CD8-positive, alpha-beta T cell (primary cell): ENCODE measurements at regions of chr10 and their contacts with region 1.

Region 1: GRCh38 chr10:112314822-112315474 is 31.7 kb downstream of the TECTB start:
- DNase-seq: peak; percentile 43 to 80 (median 76)
- ATAC-seq: peak; percentile 61
- H3K4me3 ChIP-seq: no peak overlapping the region
- H3K4me3 Mint-ChIP-seq: no peak overlapping the region
- H3K27ac ChIP-seq: no peak overlapping the region
- H3K27ac Mint-ChIP-seq: no peak overlapping the region
- H3K4me1 ChIP-seq: no peaks in the 10 kb centered on the region
- H3K4me1 Mint-ChIP-seq: no peaks in the 10 kb centered on the region
- H3K27me3 ChIP-seq: no peaks in the 10 kb centered on the region
- H3K27me3 Mint-ChIP-seq: peaks cover 30% of the 10 kb centered on the region
- CTCF ChIP-seq: peak; percentile 86

Region 2: DNA sequence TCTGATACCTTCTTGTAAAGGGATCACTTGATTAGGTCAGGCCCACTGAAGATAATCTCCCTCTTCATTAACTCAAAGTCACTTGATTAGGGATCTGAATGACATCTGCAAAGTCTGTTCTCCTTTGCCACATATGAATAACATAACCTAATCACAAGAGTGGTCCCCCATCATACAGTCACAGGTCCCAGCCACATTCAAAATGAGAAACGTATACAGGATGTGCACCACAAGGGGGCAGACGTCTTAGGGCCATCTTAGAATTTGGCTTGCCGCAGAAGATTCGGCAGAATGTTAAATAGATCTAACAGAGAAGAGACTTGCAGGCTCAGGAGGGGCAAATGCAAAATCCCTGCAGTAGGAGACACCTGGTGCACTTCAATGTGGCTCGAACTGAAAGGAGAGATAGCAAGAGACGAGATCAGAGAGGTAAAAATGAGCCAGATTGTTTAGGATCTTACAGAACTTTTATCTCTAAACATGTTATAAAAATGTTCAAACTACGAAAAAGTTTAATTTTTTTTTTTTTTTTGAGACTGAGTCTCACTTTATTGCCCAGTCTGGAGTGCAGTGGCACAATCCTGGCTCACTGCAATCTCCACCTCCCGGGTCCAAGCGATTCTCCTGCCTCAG is 1757.9 kb before region 1 on chr10:
- CTCF ChIA-PET with region 1: interaction called, 3 read pairs
- POLR2A ChIA-PET with region 1: no interaction called
- intact Hi-C with region 1: loop called in 1 of 2 experiments (anchors 2 kb)
- DNase-seq: peak; percentile 37 to 85 (median 71)
- ATAC-seq: peak; percentile 99
- H3K4me3 ChIP-seq: no peak overlapping the region
- H3K4me3 Mint-ChIP-seq: no peak overlapping the region
- H3K27ac ChIP-seq: no peak overlapping the region
- H3K27ac Mint-ChIP-seq: no peak overlapping the region
- H3K4me1 ChIP-seq: no peaks in the 10 kb centered on the region
- H3K4me1 Mint-ChIP-seq: peaks cover 3% of the 10 kb centered on the region
- H3K27me3 ChIP-seq: no peaks in the 10 kb centered on the region
- H3K27me3 Mint-ChIP-seq: peaks cover 6% of the 10 kb centered on the region
- CTCF ChIP-seq: peak; percentile 82

Region 3: GRCh38 chr10:112115799-112116385 is 199.1 kb before region 1 on chr10:
- CTCF ChIA-PET with region 1: no interaction called
- POLR2A ChIA-PET with region 1: no interaction called
- intact Hi-C with region 1: loop called in 1 of 2 experiments (anchors 5 kb)
- DNase-seq: peak in 6 of 9 experiments; percentile 7 to 49 (median 34)
- ATAC-seq: no peak
- H3K4me3 ChIP-seq: no peak overlapping the region
- H3K4me3 Mint-ChIP-seq: no peak overlapping the region
- H3K27ac ChIP-seq: no peak overlapping the region
- H3K27ac Mint-ChIP-seq: no peak overlapping the region
- H3K4me1 ChIP-seq: no peaks in the 10 kb centered on the region
- H3K4me1 Mint-ChIP-seq: no peaks in the 10 kb centered on the region
- H3K27me3 ChIP-seq: no peaks in the 10 kb centered on the region
- H3K27me3 Mint-ChIP-seq: no peaks in the 10 kb centered on the region
- CTCF ChIP-seq: peak; percentile 58

Region 4: GRCh38 chr10:112294169-112294568 is 20.8 kb before region 1 on chr10:
- CTCF ChIA-PET with region 1: interaction called, 10 read pairs
- POLR2A ChIA-PET with region 1: no interaction called
- intact Hi-C with region 1: no loop called
- DNase-seq: no peak
- ATAC-seq: no peak
- H3K4me3 ChIP-seq: no peak overlapping the region
- H3K4me3 Mint-ChIP-seq: no peak overlapping the region
- H3K27ac ChIP-seq: no peak overlapping the region
- H3K27ac Mint-ChIP-seq: no peak overlapping the region
- H3K4me1 ChIP-seq: no peaks in the 10 kb centered on the region
- H3K4me1 Mint-ChIP-seq: no peaks in the 10 kb centered on the region
- H3K27me3 ChIP-seq: peaks cover 0 to 4% of the 10 kb centered on the region in 2 experiments
- H3K27me3 Mint-ChIP-seq: peaks cover 8% of the 10 kb centered on the region
- CTCF ChIP-seq: no peak

Region 5: GRCh38 chr10:112327678-112328077 is 12.7 kb after region 1 on chr10:
- CTCF ChIA-PET with region 1: interaction called, 22 read pairs
- POLR2A ChIA-PET with region 1: no interaction called
- intact Hi-C with region 1: no loop called
- DNase-seq: no peak
- ATAC-seq: no peak
- H3K4me3 ChIP-seq: no peak overlapping the region
- H3K4me3 Mint-ChIP-seq: no peak overlapping the region
- H3K27ac ChIP-seq: no peak overlapping the region
- H3K27ac Mint-ChIP-seq: no peak overlapping the region
- H3K4me1 ChIP-seq: no peaks in the 10 kb centered on the region
- H3K4me1 Mint-ChIP-seq: no peaks in the 10 kb centered on the region
- H3K27me3 ChIP-seq: no peaks in the 10 kb centered on the region
- H3K27me3 Mint-ChIP-seq: peaks cover 8% of the 10 kb centered on the region
- CTCF ChIP-seq: no peak

Region 6: DNA sequence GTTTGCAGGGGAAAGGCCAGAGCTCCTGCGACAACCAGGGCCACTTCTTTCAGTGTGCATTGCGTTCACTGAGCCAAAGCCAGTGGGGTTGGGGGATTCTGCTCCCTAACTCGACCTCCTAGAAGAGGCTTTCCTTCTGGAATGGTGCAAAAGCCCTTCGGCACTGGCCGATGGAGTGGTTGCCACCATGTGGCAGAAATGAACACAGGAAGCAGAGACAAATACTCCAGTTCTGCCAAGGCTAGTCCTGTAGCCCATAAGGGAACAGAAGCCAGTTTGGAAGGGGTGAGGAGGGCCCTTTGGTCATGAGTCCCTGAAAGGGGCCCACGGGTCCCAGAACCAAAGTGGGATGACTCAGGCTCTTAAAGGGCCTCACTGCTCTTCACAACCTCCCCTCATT is 29.3 kb after region 1 on chr10:
- CTCF ChIA-PET with region 1: no interaction called
- POLR2A ChIA-PET with region 1: no interaction called
- intact Hi-C with region 1: no loop called
- DNase-seq: no peak
- ATAC-seq: no peak
- H3K4me3 ChIP-seq: no peak overlapping the region
- H3K4me3 Mint-ChIP-seq: no peak overlapping the region
- H3K27ac ChIP-seq: no peak overlapping the region
- H3K27ac Mint-ChIP-seq: no peak overlapping the region
- H3K4me1 ChIP-seq: no peaks in the 10 kb centered on the region
- H3K4me1 Mint-ChIP-seq: no peaks in the 10 kb centered on the region
- H3K27me3 ChIP-seq: no peaks in the 10 kb centered on the region
- H3K27me3 Mint-ChIP-seq: no peaks in the 10 kb centered on the region
- CTCF ChIP-seq: no peak

Region 7: GRCh38 chr10:112434988-112435619 is 120.2 kb after region 1 on chr10:
- CTCF ChIA-PET with region 1: interaction called, 6 read pairs
- POLR2A ChIA-PET with region 1: no interaction called
- intact Hi-C with region 1: loop called (anchors 2 to 10 kb)
- DNase-seq: peak in 2 of 9 experiments; percentile 43 to 56
- ATAC-seq: peak; percentile 36
- H3K4me3 ChIP-seq: no peak overlapping the region
- H3K4me3 Mint-ChIP-seq: no peak overlapping the region
- H3K27ac ChIP-seq: no peak overlapping the region
- H3K27ac Mint-ChIP-seq: no peak overlapping the region
- H3K4me1 ChIP-seq: no peaks in the 10 kb centered on the region
- H3K4me1 Mint-ChIP-seq: no peaks in the 10 kb centered on the region
- H3K27me3 ChIP-seq: no peaks in the 10 kb centered on the region
- H3K27me3 Mint-ChIP-seq: no peaks in the 10 kb centered on the region
- CTCF ChIP-seq: peak; percentile 63

Region 8: DNA sequence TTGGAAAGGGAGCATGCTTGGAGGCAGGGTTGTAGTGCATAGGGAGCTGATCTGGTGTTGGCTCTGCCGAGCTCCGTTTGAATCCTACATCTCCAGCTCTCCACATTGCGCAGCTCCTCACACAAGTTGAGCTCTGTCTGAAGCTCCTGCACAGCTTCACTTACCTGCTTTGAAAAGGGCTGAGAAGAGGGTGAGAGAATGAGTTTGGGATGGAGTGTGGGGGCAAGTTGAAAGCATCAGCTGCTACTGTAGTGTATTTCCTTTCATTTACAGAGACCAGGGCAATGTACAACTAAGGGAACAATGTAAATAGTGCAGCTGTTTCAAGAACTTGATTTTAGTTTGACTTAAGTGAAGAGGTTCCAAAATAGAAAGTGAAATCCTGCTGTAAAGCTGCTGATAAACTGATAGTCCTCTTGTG is 220.6 kb after region 1 on chr10:
- CTCF ChIA-PET with region 1: no interaction called
- POLR2A ChIA-PET with region 1: no interaction called
- intact Hi-C with region 1: no loop called
- DNase-seq: no peak
- ATAC-seq: no peak
- H3K4me3 ChIP-seq: no peak overlapping the region
- H3K4me3 Mint-ChIP-seq: no peak overlapping the region
- H3K27ac ChIP-seq: no peak overlapping the region
- H3K27ac Mint-ChIP-seq: no peak overlapping the region
- H3K4me1 ChIP-seq: no peaks in the 10 kb centered on the region
- H3K4me1 Mint-ChIP-seq: peaks cover 29% of the 10 kb centered on the region
- H3K27me3 ChIP-seq: no peaks in the 10 kb centered on the region
- H3K27me3 Mint-ChIP-seq: no peaks in the 10 kb centered on the region
- CTCF ChIP-seq: no peak

Region 9: GRCh38 chr10:113369365-113369694 is 1054.4 kb after region 1 on chr10:
- CTCF ChIA-PET with region 1: no interaction called
- POLR2A ChIA-PET with region 1: no interaction called
- intact Hi-C with region 1: no loop called
- DNase-seq: no peak
- ATAC-seq: no peak
- H3K4me3 ChIP-seq: no peak overlapping the region
- H3K4me3 Mint-ChIP-seq: no peak overlapping the region
- H3K27ac ChIP-seq: no peak overlapping the region
- H3K27ac Mint-ChIP-seq: no peak overlapping the region
- H3K4me1 ChIP-seq: no peaks in the 10 kb centered on the region
- H3K4me1 Mint-ChIP-seq: no peaks in the 10 kb centered on the region
- H3K27me3 ChIP-seq: no peaks in the 10 kb centered on the region
- H3K27me3 Mint-ChIP-seq: peaks cover 2% of the 10 kb centered on the region
- CTCF ChIP-seq: no peak